H1 (cell line): ENCODE measurements at regions of chr2 and their contacts with region 1.

Region 1: DNA sequence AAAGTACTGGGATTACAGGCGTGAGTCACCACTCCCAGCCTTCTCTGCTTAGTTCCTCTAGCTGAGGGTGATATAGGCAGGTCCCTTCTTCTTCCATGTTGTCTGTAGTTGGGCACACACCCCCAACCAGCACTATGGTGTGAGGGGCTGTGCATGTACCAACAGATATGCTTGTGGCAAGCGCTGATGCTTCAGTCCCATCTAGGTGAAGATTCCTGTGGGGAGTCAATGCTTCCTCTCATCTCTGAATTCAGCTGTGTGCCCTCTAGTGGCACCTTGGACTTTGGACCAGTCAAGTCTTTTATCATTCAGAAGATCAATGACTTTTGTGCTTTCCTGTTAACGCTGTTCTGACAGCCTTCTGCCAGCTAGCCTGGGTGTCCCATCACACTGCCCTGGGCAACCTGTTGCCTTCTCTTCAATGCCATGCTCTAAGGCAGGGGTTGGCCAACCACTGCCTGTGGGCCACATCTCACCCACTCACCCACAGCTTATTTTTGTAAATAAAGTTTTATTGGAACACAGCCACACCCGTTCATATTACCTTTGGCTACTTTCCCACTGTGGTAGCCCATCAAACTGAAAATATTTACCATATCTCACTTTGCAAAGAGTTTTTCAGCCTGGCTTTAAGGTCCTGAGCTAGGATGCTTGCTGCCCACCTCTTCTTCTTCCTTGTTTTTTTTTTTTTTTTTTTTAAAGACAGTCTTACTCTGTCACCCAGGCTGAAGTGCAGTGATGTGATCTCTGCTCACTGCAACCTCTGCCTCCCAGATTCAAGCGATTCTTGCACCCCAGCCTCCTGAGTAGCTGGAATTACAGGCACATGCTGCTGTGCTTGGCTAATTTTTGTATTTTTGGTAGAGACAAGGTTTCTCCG is 51.0 kb downstream of the NPAS2 start:
- DNase-seq: no peak
- H3K4me3 ChIP-seq: no peak overlapping the region
- H3K27ac ChIP-seq: no peak overlapping the region
- H3K4me1 ChIP-seq: no peaks in the 10 kb centered on the region; a peak in 2 of 7 replicates
- H3K27me3 ChIP-seq: no peaks in the 10 kb centered on the region
- CTCF ChIP-seq: peak in 2 of 3 experiments; percentile 55 to 64; a peak in 3 of 4 replicates
- EP300 ChIP-seq: no peak
- POLR2A ChIP-seq: no peak
- RAD21 ChIP-seq: peak; percentile 36 to 59

Region 2: GRCh38 chr2:100730346-100730745 is 140.5 kb before region 1 on chr2:
- CTCF ChIA-PET with region 1: interaction called, 17 read pairs
- POLR2A ChIA-PET with region 1: no interaction called
- DNase-seq: peak; percentile 43 to 68
- H3K4me3 ChIP-seq: no peak overlapping the region
- H3K27ac ChIP-seq: no peak overlapping the region
- H3K4me1 ChIP-seq: peaks cover 0 to 6% (median 2%) of the 10 kb centered on the region in 4 experiments; a peak in 3 of 7 replicates
- H3K27me3 ChIP-seq: no peaks in the 10 kb centered on the region
- CTCF ChIP-seq: peak; percentile 50 to 84 (median 73)
- EP300 ChIP-seq: no peak
- POLR2A ChIP-seq: no peak
- RAD21 ChIP-seq: peak; percentile 91 to 94

Region 3: GRCh38 chr2:100887713-100888495 is 17.0 kb after region 1 on chr2:
- CTCF ChIA-PET with region 1: interaction called, 21 read pairs
- POLR2A ChIA-PET with region 1: interaction called, 3 read pairs
- DNase-seq: no peak
- H3K4me3 ChIP-seq: no peak overlapping the region
- H3K27ac ChIP-seq: no peak overlapping the region
- H3K4me1 ChIP-seq: peaks cover 0 to 16% (median 11%) of the 10 kb centered on the region in 4 experiments; a peak in 5 of 7 replicates
- H3K27me3 ChIP-seq: no peaks in the 10 kb centered on the region
- CTCF ChIP-seq: no peak
- EP300 ChIP-seq: no peak
- POLR2A ChIP-seq: no peak
- RAD21 ChIP-seq: no peak